ENCODE measurements at regions of chr10 and their contacts with region 1.

Region 1: DNA sequence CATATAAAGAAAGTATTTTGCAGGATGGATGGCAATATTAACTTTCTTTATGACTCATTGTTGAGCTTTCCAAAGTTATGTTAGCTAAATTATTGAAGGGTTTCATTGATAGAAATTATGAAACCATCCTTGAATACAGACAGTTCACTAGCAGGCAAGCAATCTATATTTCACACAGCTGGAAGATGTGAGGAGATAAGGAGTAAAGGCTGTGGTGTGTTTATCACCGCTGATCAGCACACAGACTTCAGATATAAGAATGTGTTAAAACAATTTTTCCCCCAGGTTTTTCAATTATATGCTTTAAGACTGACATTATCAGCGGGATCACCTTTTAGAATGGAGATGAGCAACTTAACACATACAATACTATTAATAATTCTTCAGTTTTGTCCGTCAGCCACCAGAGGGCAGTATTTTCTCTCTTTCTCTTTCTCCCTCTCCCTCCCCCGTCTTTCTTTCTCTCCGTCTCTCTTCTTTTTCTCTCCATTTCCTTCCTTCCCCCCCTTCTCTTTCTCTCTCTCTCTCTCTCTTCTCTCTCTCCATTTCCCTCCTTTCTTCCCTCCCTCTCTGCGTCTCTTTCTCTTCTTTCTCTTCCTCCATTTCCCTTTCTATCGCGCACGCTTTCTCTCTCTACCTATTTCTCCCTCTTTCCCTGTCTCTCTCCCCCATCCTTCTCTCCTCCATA is 62.9 kb upstream of the FAM171A1 start:
- DNase-seq: peak in 1 of 2 experiments; percentile 74
- H3K4me3 ChIP-seq: peak overlapping the region; percentile 27
- H3K4me3 Mint-ChIP-seq: peak overlapping the region; percentile 70
- H3K27ac Mint-ChIP-seq: no peak overlapping the region
- H3K4me1 ChIP-seq: peaks cover 4% of the 10 kb centered on the region; the same call in 1 of the 2 replicates
- H3K4me1 Mint-ChIP-seq: peaks cover 15% of the 10 kb centered on the region
- H3K27me3 ChIP-seq: no peaks in the 10 kb centered on the region
- H3K27me3 Mint-ChIP-seq: peaks cover 3% of the 10 kb centered on the region
- CTCF ChIP-seq: peak; percentile 79 to 92

Region 2: GRCh38 chr10:15558136-15558535 is 124.1 kb after region 1 on chr10:
- CTCF ChIA-PET with region 1: interaction called, 3 read pairs
- POLR2A ChIA-PET with region 1: no interaction called
- intact Hi-C with region 1: loop called (anchors 5 kb)
- DNase-seq: no peak
- H3K4me3 ChIP-seq: no peak overlapping the region
- H3K4me3 Mint-ChIP-seq: no peak overlapping the region
- H3K27ac Mint-ChIP-seq: no peak overlapping the region
- H3K4me1 ChIP-seq: no peaks in the 10 kb centered on the region
- H3K4me1 Mint-ChIP-seq: no peaks in the 10 kb centered on the region
- H3K27me3 ChIP-seq: no peaks in the 10 kb centered on the region
- H3K27me3 Mint-ChIP-seq: peaks cover 15% of the 10 kb centered on the region
- CTCF ChIP-seq: no peak

Region 3: DNA sequence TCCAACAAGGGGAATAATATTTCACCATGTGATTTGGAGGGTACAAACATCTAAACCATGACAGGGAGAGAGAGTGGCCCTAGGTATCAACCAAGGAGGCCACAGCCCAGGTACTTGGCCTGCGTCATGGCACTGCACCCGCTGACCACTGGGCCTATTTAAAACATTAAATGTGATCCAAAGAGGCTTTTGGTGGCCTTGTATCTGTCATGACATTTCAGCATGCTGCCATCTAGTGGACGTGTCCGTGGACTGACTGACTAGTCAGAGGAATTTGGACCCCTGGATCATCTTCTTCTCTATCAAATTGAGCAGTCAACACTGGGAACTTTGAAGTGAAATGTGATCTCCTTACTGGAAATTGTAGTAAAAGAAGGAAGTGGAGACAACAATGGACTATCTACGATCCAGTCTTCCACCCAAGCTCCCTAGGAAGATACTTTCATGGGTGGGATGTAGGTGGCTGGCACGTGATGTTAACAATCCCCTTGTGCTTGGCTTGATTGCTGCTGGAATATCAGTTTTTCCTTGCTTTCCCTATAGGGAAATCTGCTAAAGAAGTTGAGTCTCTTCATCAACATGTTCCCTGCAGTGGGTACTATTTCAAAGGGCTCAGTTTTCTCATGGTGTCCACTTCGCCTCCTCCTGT is 310.3 kb after region 1 on chr10:
- CTCF ChIA-PET with region 1: no interaction called
- POLR2A ChIA-PET with region 1: no interaction called
- intact Hi-C with region 1: loop called (anchors 1 kb)
- DNase-seq: peak; percentile 69 to 75
- H3K4me3 ChIP-seq: no peak overlapping the region
- H3K4me3 Mint-ChIP-seq: no peak overlapping the region
- H3K27ac Mint-ChIP-seq: no peak overlapping the region
- H3K4me1 ChIP-seq: no peaks in the 10 kb centered on the region
- H3K4me1 Mint-ChIP-seq: no peaks in the 10 kb centered on the region
- H3K27me3 ChIP-seq: no peaks in the 10 kb centered on the region
- H3K27me3 Mint-ChIP-seq: peaks cover 26% of the 10 kb centered on the region
- CTCF ChIP-seq: peak; percentile 66 to 85

Region 4: DNA sequence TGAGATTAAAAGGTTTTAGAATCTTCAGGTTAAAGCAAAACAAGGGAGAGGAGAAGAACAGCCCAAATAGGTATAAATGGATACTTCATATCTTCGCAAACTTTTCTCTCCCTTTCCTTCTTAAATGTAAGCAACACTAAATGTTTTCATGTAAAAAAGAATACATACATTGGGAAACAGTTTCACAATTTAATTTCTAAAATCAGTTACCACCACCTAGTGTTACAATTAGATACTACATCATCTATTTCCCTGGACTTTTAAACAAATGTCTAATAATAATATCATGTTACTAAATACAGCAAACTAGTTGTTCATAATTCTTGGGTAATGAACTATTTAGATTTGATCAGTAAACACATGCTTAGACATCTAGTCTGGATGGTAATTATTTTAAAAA is 390.5 kb after region 1 on chr10:
- CTCF ChIA-PET with region 1: no interaction called
- POLR2A ChIA-PET with region 1: no interaction called
- intact Hi-C with region 1: loop called (anchors 2 kb)
- DNase-seq: no peak
- H3K4me3 ChIP-seq: no peak overlapping the region
- H3K4me3 Mint-ChIP-seq: no peak overlapping the region
- H3K27ac Mint-ChIP-seq: no peak overlapping the region
- H3K4me1 ChIP-seq: no peaks in the 10 kb centered on the region
- H3K4me1 Mint-ChIP-seq: no peaks in the 10 kb centered on the region
- H3K27me3 ChIP-seq: no peaks in the 10 kb centered on the region
- H3K27me3 Mint-ChIP-seq: no peaks in the 10 kb centered on the region
- CTCF ChIP-seq: peak; percentile 31 to 58

Measured in Caco-2 (cell line).